Activated naive CD4-positive, alpha-beta T cell treated with anti-CD3 and anti-CD28 coated beads for 36 hours (primary cell): ENCODE measurements at regions of chr2 and their contacts with region 1.

Region 1: GRCh38 chr2:202634556-202635427 is at the start of gene FAM117B:
- DNase-seq: peak; percentile 99
- H3K4me3 Mint-ChIP-seq: peak within 1 kb of the TSS; percentile 96
- H3K27ac Mint-ChIP-seq: peak within 1 kb of the TSS; percentile 96
- H3K4me1 Mint-ChIP-seq: peaks cover 50% of the 10 kb centered on the region
- H3K27me3 Mint-ChIP-seq: no peaks in the 10 kb centered on the region
- total RNA-seq, gene FAM117B: 12.3 to 14.2 TPM

Region 2: DNA sequence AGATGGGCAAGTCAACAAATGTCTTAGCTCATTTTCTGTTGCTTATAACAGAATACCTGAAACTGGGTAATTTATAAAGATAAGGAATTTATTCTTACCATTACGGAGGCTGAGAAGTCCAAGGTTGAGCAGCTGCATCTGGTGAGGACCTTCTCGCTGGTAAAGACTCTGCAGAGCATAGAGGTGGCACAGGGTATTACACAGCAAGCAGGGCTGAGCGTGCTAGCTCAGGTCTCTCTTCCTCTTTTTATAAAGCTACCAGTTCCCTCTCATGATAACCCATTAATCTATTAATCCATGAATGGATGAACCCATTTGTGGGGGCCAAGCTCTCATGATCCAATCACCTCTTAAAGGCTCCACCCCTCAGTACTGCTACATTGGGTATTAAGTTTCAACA is 719.3 kb before region 1 on chr2:
- CTCF ChIA-PET with region 1: no interaction called
- intact Hi-C with region 1: no loop called
- DNase-seq: no peak
- H3K4me3 Mint-ChIP-seq: no peak overlapping the region
- H3K27ac Mint-ChIP-seq: no peak overlapping the region
- H3K4me1 Mint-ChIP-seq: no peaks in the 10 kb centered on the region
- H3K27me3 Mint-ChIP-seq: no peaks in the 10 kb centered on the region

Region 3: GRCh38 chr2:202375609-202376408 is 259.0 kb before region 1 on chr2 and contains the start of gene BMPR2:
- CTCF ChIA-PET with region 1: no interaction called
- intact Hi-C with region 1: loop called (anchors 5 kb)
- DNase-seq: peak; percentile 79
- H3K4me3 Mint-ChIP-seq: peak within 1 kb of the TSS; percentile 96
- H3K27ac Mint-ChIP-seq: peak within 1 kb of the TSS; percentile 71
- H3K4me1 Mint-ChIP-seq: peaks cover 20% of the 10 kb centered on the region
- H3K27me3 Mint-ChIP-seq: no peaks in the 10 kb centered on the region
- total RNA-seq, gene BMPR2: 4.2 to 5.5 TPM

Region 4: DNA sequence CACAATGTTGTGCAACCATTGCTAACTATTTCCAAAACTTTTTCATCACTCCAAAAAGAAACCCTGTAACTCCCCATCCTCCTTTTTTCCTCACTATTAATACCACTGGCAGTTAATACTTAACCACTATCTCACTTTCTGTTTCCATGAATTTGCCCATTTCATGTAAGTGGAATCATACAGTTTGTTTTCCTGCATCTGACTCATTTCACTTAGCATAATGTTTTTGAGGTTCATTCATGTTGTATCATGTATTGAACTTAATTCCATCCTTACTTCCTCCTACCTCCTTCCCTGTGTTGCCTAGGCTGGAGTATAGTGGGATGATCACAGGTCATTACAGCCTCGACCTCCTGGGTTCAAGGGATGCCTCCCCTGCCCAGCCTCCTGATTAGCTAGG is 68.3 kb after region 1 on chr2:
- CTCF ChIA-PET with region 1: interaction called, 3 read pairs
- intact Hi-C with region 1: loop called (anchors 1 kb)
- DNase-seq: no peak
- H3K4me3 Mint-ChIP-seq: no peak overlapping the region
- H3K27ac Mint-ChIP-seq: peak overlapping the region; percentile 71
- H3K4me1 Mint-ChIP-seq: peaks cover 70% of the 10 kb centered on the region
- H3K27me3 Mint-ChIP-seq: no peaks in the 10 kb centered on the region

Region 5: GRCh38 chr2:202911512-202912341 is 276.9 kb after region 1 on chr2 and contains the starts of genes CARF and WDR12:
- CTCF ChIA-PET with region 1: no interaction called
- intact Hi-C with region 1: loop called (anchors 1 kb)
- DNase-seq: peak; percentile 95
- H3K4me3 Mint-ChIP-seq: peak within 1 kb of the TSS; percentile 87
- H3K27ac Mint-ChIP-seq: peak within 1 kb of the TSS; percentile 94
- H3K4me1 Mint-ChIP-seq: peaks cover 32% of the 10 kb centered on the region
- H3K27me3 Mint-ChIP-seq: no peaks in the 10 kb centered on the region
- total RNA-seq, gene CARF: 4.0 to 5.4 TPM
- total RNA-seq, gene WDR12: 83.0 to 98.3 TPM

Region 6: DNA sequence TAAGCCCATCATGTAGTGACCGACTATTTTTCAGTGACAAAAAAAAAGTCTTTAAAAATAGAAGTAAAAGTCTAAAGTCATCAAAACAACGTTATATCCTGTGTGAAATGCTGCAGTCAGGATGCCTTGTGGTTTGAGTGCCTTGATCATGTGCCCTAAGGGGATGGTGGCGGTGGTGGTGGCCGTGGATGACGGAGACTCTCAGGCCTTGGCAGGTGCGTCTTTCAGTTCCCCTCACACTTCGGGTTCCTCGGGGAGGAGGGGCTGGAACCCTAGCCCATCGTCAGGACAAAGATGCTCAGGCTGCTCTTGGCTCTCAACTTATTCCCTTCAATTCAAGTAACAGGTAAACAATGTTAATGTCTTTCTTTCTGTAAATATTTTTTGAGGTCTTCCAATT is 1071.6 kb after region 1 on chr2 and contains the start of gene CD28:
- CTCF ChIA-PET with region 1: no interaction called
- intact Hi-C with region 1: loop called (anchors 5 kb)
- DNase-seq: peak; percentile 97
- H3K4me3 Mint-ChIP-seq: peak within 1 kb of the TSS; percentile 89
- H3K27ac Mint-ChIP-seq: peak within 1 kb of the TSS; percentile 93
- H3K4me1 Mint-ChIP-seq: peaks cover 37% of the 10 kb centered on the region
- H3K27me3 Mint-ChIP-seq: no peaks in the 10 kb centered on the region
- total RNA-seq, gene CD28: 165 to 167 TPM

Region 7: DNA sequence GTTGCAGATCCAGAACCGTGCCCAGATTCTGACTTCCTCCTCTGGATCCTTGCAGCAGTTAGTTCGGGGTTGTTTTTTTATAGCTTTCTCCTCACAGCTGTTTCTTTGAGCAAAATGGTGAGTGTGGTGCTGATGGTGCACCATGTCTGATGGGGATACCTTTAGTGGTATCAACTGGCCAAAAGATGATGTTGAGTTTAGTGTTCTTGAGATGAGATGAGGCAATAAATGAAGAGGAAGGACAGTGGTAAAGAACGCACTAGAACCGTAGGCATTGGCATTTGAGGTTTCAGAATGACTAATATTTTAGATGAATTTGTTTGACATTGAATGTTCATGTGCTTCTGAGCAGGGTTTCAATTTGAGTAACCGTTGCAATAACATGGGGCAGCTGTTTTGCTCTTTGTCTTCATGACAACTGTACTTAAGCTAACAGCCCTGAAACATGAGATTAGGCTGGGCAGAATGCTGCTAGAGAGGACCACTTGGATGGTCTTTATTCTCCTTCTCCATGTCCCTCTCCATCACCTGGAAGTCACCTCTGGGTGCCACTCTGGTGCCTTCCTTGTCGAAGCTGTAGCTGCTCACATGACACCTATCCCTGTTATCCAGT is 1236.7 kb after region 1 on chr2:
- CTCF ChIA-PET with region 1: no interaction called
- intact Hi-C with region 1: loop called (anchors 10 kb)
- DNase-seq: peak; percentile 69
- H3K4me3 Mint-ChIP-seq: peak overlapping the region; percentile 92
- H3K27ac Mint-ChIP-seq: peak overlapping the region; percentile 99
- H3K4me1 Mint-ChIP-seq: peaks cover 55% of the 10 kb centered on the region
- H3K27me3 Mint-ChIP-seq: no peaks in the 10 kb centered on the region

Region 8: GRCh38 chr2:203949228-203949627 is 1314.4 kb after region 1 on chr2:
- CTCF ChIA-PET with region 1: no interaction called
- intact Hi-C with region 1: no loop called
- DNase-seq: no peak
- H3K4me3 Mint-ChIP-seq: peak overlapping the region; percentile 42
- H3K27ac Mint-ChIP-seq: peak overlapping the region; percentile 70
- H3K4me1 Mint-ChIP-seq: peaks cover 87% of the 10 kb centered on the region
- H3K27me3 Mint-ChIP-seq: no peaks in the 10 kb centered on the region